ENCODE measurements at regions of chr11 and their contacts with region 1.

Region 1: GRCh38 chr11:123020968-123021367 is 39.3 kb upstream of the BSX start:
- DNase-seq: peak; percentile 77
- CTCF ChIP-seq: peak; percentile 71

Region 2: GRCh38 chr11:122874991-122875390 is 146.0 kb before region 1 on chr11:
- CTCF ChIA-PET with region 1: interaction called, 24 read pairs
- POLR2A ChIA-PET with region 1: no interaction called
- DNase-seq: peak; percentile 29
- CTCF ChIP-seq: no peak

Region 3: DNA sequence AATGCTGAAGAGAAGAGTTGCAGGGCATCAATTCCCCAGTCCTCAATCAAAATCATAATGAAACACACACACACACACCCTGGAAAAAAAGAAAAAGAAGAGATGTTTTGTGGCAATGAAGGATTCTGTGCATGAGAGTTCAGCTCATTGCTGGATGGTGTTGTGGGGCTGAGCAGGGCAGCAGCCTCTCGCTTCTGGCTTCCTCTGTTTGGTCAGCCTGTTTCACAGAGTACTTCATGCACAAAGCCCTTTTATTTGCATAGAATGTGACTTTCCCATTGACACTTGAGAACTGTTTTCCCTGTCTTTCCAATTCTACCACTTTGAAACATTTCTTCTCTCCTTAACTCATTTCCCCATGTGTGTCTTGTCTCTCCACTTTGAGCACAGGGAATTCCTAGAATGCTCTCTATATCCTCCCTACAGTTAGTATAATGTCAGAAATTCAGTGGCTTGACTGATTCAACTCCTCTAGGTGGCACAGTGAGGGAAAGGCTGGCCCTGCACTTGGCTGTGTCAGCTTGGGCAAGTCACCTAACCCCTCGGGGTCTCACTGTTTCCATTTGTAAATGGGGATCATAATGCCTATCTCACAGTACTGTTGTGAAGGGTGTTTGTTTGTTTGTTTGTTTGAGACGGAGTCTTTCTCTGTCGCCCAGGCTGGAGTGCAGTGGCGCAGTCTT is 14.0 kb before region 1 on chr11:
- CTCF ChIA-PET with region 1: interaction called, 36 read pairs
- POLR2A ChIA-PET with region 1: no interaction called
- DNase-seq: no peak
- CTCF ChIP-seq: no peak

Region 4: GRCh38 chr11:123046473-123047259 is 25.7 kb after region 1 on chr11:
- CTCF ChIA-PET with region 1: interaction called, 50 read pairs
- POLR2A ChIA-PET with region 1: no interaction called
- DNase-seq: no peak
- CTCF ChIP-seq: no peak